AG04450 (cell line): ENCODE measurements at regions of chr17 and their contacts with region 1.

Region 1: GRCh38 chr17:28405632-28406472 is at the start of gene SLC46A1:
- DNase-seq: no peak
- H3K4me3 ChIP-seq: peak within 1 kb of the TSS; percentile 72
- H3K27ac ChIP-seq: no peak within 1 kb of the TSS
- H3K27me3 ChIP-seq: peaks cover 3% of the 10 kb centered on the region
- CTCF ChIP-seq: no peak
- polyA plus RNA-seq, gene SLC46A1: 2.5 and 3.4 TPM in 2 replicates

Region 2: GRCh38 chr17:28416703-28417311 is 11.0 kb after region 1 on chr17:
- CTCF ChIA-PET with region 1: interaction called, 39 read pairs
- POLR2A ChIA-PET with region 1: no interaction called
- DNase-seq: peak; percentile 24
- H3K4me3 ChIP-seq: no peak overlapping the region
- H3K27ac ChIP-seq: no peak overlapping the region
- H3K27me3 ChIP-seq: peaks cover 23% of the 10 kb centered on the region
- CTCF ChIP-seq: peak; percentile 79